Stomach (tissue), 19 donors: ENCODE measurements at regions of chr2 and their contacts with region 1.

Region 1: GRCh38 chr2:177429688-177430325 is 37.2 kb downstream of the AGPS start:
- DNase-seq: no peak
- H3K4me3 ChIP-seq: no peak overlapping the region
- H3K27ac ChIP-seq: no peak overlapping the region
- H3K4me1 ChIP-seq: no peaks in the 10 kb centered on the region
- H3K27me3 ChIP-seq: no peaks in the 10 kb centered on the region
- CTCF ChIP-seq: no peak
- EP300 ChIP-seq: no peak
- POLR2A ChIP-seq: no peak

Region 2: GRCh38 chr2:177155631-177156030 is 274.2 kb before region 1 on chr2:
- intact Hi-C with region 1: loop called (anchors 10 kb)
- DNase-seq: no peak
- H3K4me3 ChIP-seq: no peak overlapping the region
- H3K27ac ChIP-seq: no peak overlapping the region
- H3K4me1 ChIP-seq: no peaks in the 10 kb centered on the region
- H3K27me3 ChIP-seq: peaks cover 0 to 17% (median 0%) of the 10 kb centered on the region in 3 donors
- CTCF ChIP-seq: no peak
- EP300 ChIP-seq: no peak
- POLR2A ChIP-seq: no peak